ENCODE measurements at regions of chr9 and their contacts with region 1.

Region 1: GRCh38 chr9:35489313-35490154 is at the start of gene RUSC2:
- DNase-seq: peak; percentile 91 to 94
- H3K4me3 ChIP-seq: peak within 1 kb of the TSS; percentile 52
- H3K4me3 Mint-ChIP-seq: peak within 1 kb of the TSS; percentile 97
- H3K27ac Mint-ChIP-seq: peak within 1 kb of the TSS; percentile 93
- H3K4me1 ChIP-seq: peaks cover 18% of the 10 kb centered on the region
- H3K4me1 Mint-ChIP-seq: peaks cover 26% of the 10 kb centered on the region
- H3K27me3 ChIP-seq: no peaks in the 10 kb centered on the region
- H3K27me3 Mint-ChIP-seq: no peaks in the 10 kb centered on the region
- CTCF ChIP-seq: peak; percentile 39 to 62
- total RNA-seq, gene RUSC2: 13.0 and 13.5 TPM in 2 replicates

Region 2: DNA sequence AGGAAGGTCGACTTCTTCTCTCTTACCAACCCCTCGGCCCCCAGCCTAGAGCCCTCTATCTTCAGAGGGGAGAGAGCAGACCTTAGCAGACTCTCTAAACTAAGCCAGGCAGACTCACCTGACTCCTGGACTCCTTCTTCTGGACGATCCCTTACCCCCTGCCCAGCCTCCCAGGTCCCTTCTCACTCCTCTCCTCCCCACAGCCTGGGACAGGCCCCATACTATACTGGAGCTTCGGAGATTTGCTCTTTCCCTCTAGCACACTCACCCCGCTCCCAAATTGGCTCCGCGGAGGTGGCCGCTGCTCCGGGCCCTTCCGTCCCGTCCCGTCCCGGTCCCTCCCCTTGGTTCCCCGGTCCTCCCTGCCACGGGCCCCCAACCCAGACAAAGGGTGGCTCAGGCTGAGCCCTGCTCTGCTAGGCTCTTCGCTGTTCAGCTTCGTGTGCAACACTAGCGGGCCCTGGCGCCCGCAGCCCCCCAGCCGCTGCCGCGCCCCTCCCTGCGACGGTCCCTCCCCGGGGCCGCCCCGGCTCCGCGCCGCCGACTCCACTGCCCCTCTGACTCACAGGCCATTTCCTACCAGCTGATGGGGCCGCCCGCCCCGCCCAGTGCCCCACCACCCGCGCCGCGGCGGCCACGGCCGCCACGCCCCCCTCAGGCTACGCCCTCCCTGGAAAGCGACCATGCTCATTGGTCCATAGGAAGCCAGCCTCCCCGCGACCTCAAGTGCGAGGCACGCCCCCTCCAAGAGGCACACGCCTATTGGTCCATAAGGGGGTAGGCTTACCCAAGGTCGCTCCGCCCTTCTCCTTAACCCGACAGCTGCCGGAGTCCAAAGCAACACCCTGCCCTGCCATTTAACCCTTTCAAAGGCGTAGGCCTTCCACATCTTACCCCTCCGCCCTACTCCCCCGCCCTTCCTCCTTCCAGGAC is 378.3 kb before region 1 on chr9:
- CTCF ChIA-PET with region 1: no interaction called
- POLR2A ChIA-PET with region 1: no interaction called
- intact Hi-C with region 1: loop called (anchors 1 kb)
- DNase-seq: peak; percentile 98 to 99
- H3K4me3 ChIP-seq: peak overlapping the region; percentile 58
- H3K4me3 Mint-ChIP-seq: peak overlapping the region; percentile 77
- H3K27ac Mint-ChIP-seq: peak overlapping the region; percentile 59
- H3K4me1 ChIP-seq: peaks cover 26% of the 10 kb centered on the region
- H3K4me1 Mint-ChIP-seq: peaks cover 27% of the 10 kb centered on the region
- H3K27me3 ChIP-seq: no peaks in the 10 kb centered on the region
- H3K27me3 Mint-ChIP-seq: no peaks in the 10 kb centered on the region
- CTCF ChIP-seq: no peak

Region 3: DNA sequence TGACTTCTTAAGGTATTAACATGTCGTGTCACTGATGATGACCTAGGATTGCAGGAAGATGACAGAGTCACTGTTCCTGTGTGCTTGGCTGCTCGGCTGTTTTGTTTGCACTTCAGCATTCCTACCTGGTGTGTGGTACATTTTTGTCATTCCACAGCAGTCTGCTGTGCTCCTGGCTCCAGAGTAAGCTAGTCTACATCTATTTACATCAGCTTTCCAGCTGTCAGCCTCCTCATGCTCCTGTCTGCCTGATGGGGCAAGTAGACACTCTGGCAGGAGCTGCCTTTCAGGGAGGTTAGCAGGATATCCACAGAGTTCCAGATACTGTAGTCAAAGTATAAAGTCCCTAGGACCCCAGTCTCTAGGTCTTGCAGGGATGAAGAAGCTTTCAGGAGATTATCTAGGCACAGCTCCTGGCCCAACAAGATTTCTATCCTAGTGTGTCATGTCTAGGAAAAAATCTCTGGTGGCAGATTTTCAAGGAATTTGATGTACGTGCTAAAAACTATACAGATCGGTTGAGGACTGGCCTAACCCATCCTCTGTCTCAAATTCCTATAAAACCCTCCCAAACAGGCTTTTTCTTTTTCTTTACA is 28.8 kb after region 1 on chr9:
- CTCF ChIA-PET with region 1: interaction called, 6 read pairs
- POLR2A ChIA-PET with region 1: interaction called, 12 read pairs
- intact Hi-C with region 1: loop called (anchors 1 kb)
- DNase-seq: peak; percentile 88 to 93
- H3K4me3 ChIP-seq: no peak overlapping the region
- H3K4me3 Mint-ChIP-seq: peak overlapping the region; percentile 22
- H3K27ac Mint-ChIP-seq: peak overlapping the region; percentile 81
- H3K4me1 ChIP-seq: peaks cover 67% of the 10 kb centered on the region
- H3K4me1 Mint-ChIP-seq: peaks cover 59% of the 10 kb centered on the region
- H3K27me3 ChIP-seq: no peaks in the 10 kb centered on the region
- H3K27me3 Mint-ChIP-seq: no peaks in the 10 kb centered on the region
- CTCF ChIP-seq: no peak

Region 4: DNA sequence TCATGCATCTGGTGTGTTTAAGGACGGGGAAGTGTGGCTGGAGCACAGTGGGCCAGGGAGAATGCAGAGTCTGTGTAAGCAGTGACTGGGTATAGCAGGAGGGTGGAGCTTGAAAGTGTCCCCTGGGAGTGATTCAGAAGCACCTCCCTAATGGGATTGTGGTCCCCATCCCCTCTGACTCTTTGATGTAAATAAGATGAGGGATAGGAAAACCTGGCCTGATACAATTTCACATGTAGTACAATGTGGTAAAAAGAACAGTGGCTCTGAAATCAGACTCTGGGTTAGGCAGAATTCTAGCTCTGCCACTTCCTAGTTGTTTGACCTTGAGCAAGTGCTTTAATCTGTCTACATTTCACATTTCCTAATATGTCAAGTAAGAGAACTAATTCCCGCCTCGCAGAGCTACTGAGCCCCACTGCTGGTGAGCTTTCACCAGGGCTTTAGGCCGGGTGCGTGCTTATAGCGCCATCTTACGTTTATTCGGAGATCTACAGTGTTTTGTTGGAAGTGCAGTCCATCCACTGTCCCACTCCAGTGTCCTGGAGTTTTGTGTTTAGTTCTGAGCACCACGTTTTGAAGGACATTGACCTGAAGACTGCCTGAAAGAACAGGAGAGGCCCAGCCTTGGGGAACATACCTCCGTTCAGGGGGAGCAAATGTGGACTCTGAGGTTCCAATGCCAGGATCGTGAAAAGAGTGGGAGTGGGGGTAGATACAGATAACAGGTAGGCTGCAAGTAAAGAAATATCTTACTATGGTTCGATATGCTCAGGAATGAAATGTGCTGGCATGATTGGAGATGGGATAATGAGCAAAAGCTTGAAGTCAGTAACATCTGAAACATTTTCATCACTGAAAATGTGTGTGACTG is 64.4 kb after region 1 on chr9:
- CTCF ChIA-PET with region 1: interaction called, 27 read pairs
- POLR2A ChIA-PET with region 1: interaction called, 8 read pairs
- intact Hi-C with region 1: loop called (anchors 1 kb)
- DNase-seq: peak; percentile 73 to 77
- H3K4me3 ChIP-seq: no peak overlapping the region
- H3K4me3 Mint-ChIP-seq: no peak overlapping the region
- H3K27ac Mint-ChIP-seq: no peak overlapping the region
- H3K4me1 ChIP-seq: no peaks in the 10 kb centered on the region
- H3K4me1 Mint-ChIP-seq: no peaks in the 10 kb centered on the region
- H3K27me3 ChIP-seq: no peaks in the 10 kb centered on the region
- H3K27me3 Mint-ChIP-seq: no peaks in the 10 kb centered on the region
- CTCF ChIP-seq: peak; percentile 76 to 77

Region 5: DNA sequence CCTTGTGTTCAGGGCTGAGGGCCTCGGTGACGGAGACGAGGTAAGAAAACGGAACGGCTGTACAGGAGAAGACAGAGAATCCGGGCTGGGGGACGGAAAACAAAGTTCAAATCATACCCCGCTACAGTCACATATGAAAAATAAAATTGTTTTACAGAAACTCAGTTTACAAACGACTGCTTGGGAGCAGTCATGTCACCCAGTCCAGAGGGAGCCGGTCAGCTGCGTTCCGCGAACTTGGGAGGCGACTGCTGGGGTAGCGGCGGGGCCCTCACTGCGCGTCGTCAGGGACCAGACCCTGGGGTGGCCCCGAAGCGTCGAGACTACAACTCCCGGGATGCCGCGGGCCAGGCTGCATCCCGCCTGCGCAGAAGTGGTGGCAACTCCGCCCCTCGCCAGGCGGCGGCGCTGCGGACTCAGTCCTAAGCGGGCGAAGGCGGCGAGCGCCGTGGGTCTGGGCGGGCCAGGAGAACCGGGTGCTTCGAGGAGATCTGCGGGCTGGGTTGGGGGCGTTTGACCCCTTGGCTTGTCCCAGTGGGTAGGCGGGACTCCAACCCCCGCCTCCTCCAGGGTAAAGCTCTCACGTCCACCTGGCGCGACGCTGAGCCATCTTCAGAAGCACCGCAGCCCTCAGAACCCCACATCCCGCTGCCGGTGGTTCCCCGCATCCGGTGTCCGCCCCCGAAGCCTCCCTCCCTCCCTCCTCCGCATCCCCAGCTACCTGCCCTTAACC is 157.2 kb after region 1 on chr9:
- CTCF ChIA-PET with region 1: interaction called, 7 read pairs
- POLR2A ChIA-PET with region 1: interaction called, 3 read pairs
- intact Hi-C with region 1: loop called (anchors 5 kb)
- DNase-seq: peak; percentile 90 to 97
- H3K4me3 ChIP-seq: peak overlapping the region; percentile 46
- H3K4me3 Mint-ChIP-seq: peak overlapping the region; percentile 81
- H3K27ac Mint-ChIP-seq: peak overlapping the region; percentile 84
- H3K4me1 ChIP-seq: no peaks in the 10 kb centered on the region; the same call in 1 of the 2 replicates
- H3K4me1 Mint-ChIP-seq: peaks cover 10% of the 10 kb centered on the region
- H3K27me3 ChIP-seq: no peaks in the 10 kb centered on the region
- H3K27me3 Mint-ChIP-seq: no peaks in the 10 kb centered on the region
- CTCF ChIP-seq: peak; percentile 93 to 94

Region 6: GRCh38 chr9:35657546-35658136 is 168.1 kb after region 1 on chr9 and contains the start of gene RMRP:
- CTCF ChIA-PET with region 1: no interaction called
- POLR2A ChIA-PET with region 1: no interaction called
- intact Hi-C with region 1: no loop called
- DNase-seq: peak; percentile 98 to 100
- H3K4me3 ChIP-seq: peak within 1 kb of the TSS; percentile 95
- H3K4me3 Mint-ChIP-seq: peak within 1 kb of the TSS; percentile 76
- H3K27ac Mint-ChIP-seq: peak within 1 kb of the TSS; percentile 82
- H3K4me1 ChIP-seq: 0 out of 2 replicates have a peak, but pooled peaks cover 5% of the 10 kb centered on the region
- H3K4me1 Mint-ChIP-seq: peaks cover 12% of the 10 kb centered on the region
- H3K27me3 ChIP-seq: no peaks in the 10 kb centered on the region
- H3K27me3 Mint-ChIP-seq: peaks cover 3% of the 10 kb centered on the region
- CTCF ChIP-seq: peak; percentile 15 to 21
- total RNA-seq, gene RMRP: 10,161 and 10,726 TPM in 2 replicates